ENCODE measurements at regions of chr13 and their contacts with region 1.

Region 1: GRCh38 chr13:27826379-27827353 is 34.4 kb downstream of the GSX1 start:
- DNase-seq: peak; percentile 51 to 65 (median 56)
- H3K4me3 ChIP-seq: no peak overlapping the region
- H3K4me3 Mint-ChIP-seq: peak overlapping the region in 3 of 8 donors; percentile 6 to 48 (median 30)
- H3K27ac ChIP-seq: no peak overlapping the region
- H3K27ac Mint-ChIP-seq: no peak overlapping the region
- H3K4me1 ChIP-seq: peaks cover 12% of the 10 kb centered on the region
- H3K4me1 Mint-ChIP-seq: peaks cover 3 to 12% (median 5%) of the 10 kb centered on the region in 4 donors
- H3K27me3 ChIP-seq: peaks cover 17% of the 10 kb centered on the region
- H3K27me3 Mint-ChIP-seq: peaks cover 37 to 58% of the 10 kb centered on the region in 2 donors

Region 2: DNA sequence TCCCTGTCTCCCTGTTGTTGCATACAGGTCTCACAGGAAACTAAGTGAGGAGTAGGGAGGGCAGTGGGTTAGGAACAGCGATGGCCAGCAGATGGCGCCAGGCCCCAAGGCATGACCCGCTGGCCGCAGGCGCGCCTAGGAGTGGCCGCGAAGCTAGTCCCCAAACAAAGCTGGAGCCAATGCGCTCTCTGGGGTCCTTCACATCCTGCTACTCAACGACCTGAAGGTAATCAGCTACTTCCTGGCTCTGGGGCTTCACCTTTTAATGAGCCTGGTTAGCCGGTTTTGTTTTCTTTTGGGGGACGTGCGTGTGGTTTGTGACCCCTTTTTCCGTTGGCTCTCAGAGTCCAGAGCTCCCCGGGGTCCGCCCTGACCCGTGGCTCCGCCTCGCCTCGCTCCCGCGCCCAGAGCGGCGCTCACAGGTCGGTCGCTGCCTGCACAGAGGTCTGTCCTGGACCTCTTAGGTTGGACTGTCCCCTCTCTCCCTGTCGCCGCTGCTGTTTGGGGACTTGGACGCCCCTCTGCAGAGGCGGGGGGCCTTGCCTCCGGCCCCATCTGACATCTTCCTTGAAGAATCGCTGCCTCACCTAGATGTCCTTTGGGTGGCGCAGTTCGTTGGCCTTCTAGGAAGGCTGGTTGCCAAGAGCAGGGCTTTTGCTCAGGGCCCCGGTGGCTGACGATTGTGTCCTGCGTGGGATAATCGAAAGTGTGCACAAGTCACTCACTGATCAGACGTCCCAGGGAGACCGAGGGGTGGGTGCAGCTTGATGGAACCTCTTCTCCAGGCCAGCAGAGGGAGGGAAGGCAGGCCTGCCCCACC is 464.4 kb before region 1 on chr13:
- CTCF ChIA-PET with region 1: interaction called, 205 read pairs
- POLR2A ChIA-PET with region 1: no interaction called
- intact Hi-C with region 1: loop called (anchors 1 kb)
- DNase-seq: peak; percentile 62 to 72 (median 66)
- H3K4me3 ChIP-seq: peak overlapping the region in 1 of 2 donors; percentile 17
- H3K4me3 Mint-ChIP-seq: peak overlapping the region in 6 of 8 donors; percentile 31 to 81 (median 46)
- H3K27ac ChIP-seq: no peak overlapping the region
- H3K27ac Mint-ChIP-seq: no peak overlapping the region
- H3K4me1 ChIP-seq: peaks cover 9% of the 10 kb centered on the region
- H3K4me1 Mint-ChIP-seq: peaks cover 0 to 7% (median 2%) of the 10 kb centered on the region in 4 donors
- H3K27me3 ChIP-seq: peaks cover 4% of the 10 kb centered on the region
- H3K27me3 Mint-ChIP-seq: peaks cover 5 to 22% of the 10 kb centered on the region in 2 donors

Region 3: DNA sequence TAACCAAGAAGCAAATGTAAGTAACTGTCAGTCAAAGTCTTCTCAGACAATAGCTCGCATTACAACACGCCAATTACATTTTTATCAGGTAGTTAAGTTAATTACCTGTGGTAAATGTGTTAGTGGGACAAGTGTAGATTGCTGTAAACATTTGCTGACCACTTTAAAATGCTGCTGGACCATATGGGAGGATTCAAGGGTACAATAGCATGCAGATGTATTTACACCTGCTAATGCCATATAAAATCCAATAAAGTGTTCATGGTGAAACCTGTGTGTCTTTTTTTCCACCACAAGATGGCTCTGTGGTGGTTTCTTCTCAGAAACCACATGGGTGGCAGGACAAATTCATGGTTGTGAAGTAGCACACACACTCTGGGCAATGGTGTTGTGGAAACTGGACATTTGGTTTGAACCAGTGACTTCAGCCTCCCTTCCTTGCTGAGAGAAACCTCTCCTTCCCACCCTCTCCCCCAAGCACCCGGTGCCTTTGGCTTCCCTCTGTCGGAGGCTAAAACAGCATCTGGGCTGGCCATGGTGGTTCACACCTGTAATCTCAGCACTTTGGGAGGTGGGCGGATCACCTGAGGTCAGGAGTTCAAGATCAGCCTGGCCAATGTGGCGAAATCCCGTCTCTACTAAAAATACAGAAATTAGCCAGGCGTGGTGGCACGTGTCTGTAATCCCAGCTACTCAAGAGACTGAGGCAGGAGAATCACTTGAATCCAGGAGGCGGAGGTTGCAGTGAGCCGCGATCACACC is 420.3 kb before region 1 on chr13:
- CTCF ChIA-PET with region 1: interaction called, 32 read pairs
- POLR2A ChIA-PET with region 1: no interaction called
- intact Hi-C with region 1: loop called (anchors 1 kb)
- DNase-seq: peak; percentile 49 to 60 (median 56)
- H3K4me3 ChIP-seq: no peak overlapping the region
- H3K4me3 Mint-ChIP-seq: peak overlapping the region in 1 of 8 donors; percentile 71
- H3K27ac ChIP-seq: no peak overlapping the region
- H3K27ac Mint-ChIP-seq: no peak overlapping the region
- H3K4me1 ChIP-seq: peaks cover 3% of the 10 kb centered on the region
- H3K4me1 Mint-ChIP-seq: peaks cover 2 to 6% (median 4%) of the 10 kb centered on the region in 4 donors
- H3K27me3 ChIP-seq: no peaks in the 10 kb centered on the region
- H3K27me3 Mint-ChIP-seq: peaks cover 10 to 13% of the 10 kb centered on the region in 2 donors

Region 4: GRCh38 chr13:27455331-27455855 is 371.3 kb before region 1 on chr13:
- CTCF ChIA-PET with region 1: interaction called, 13 read pairs
- POLR2A ChIA-PET with region 1: interaction called, 5 read pairs
- intact Hi-C with region 1: no loop called
- DNase-seq: peak in 4 of 5 donors; percentile 33 to 40 (median 36)
- H3K4me3 ChIP-seq: peak overlapping the region; percentile 48 to 59
- H3K4me3 Mint-ChIP-seq: peak overlapping the region; percentile 89 to 98 (median 94)
- H3K27ac ChIP-seq: peak overlapping the region; percentile 73
- H3K27ac Mint-ChIP-seq: peak overlapping the region; percentile 96 to 99 (median 98)
- H3K4me1 ChIP-seq: peaks cover 32% of the 10 kb centered on the region
- H3K4me1 Mint-ChIP-seq: peaks cover 16 to 44% (median 29%) of the 10 kb centered on the region in 4 donors
- H3K27me3 ChIP-seq: no peaks in the 10 kb centered on the region
- H3K27me3 Mint-ChIP-seq: peaks cover 0 to 2% of the 10 kb centered on the region in 2 donors

Region 5: DNA sequence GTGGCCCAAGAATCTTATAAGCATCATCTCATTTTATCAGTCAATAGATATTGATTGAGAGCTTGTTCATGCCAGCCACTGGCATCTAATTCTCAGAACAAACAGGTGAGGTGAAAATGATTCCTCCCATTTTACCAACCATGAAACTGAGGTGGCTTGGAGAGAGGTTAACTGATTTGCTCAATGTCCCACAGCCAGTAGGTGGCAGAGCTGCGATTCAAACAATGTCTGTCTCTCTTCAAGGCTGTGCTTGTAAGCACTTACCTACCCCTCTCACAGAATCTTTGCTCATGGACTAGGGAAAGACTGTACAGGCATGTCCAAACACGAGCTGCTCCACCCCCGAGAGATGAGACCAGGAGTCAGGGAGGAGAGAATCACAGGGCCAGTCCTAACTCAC is 55.9 kb before region 1 on chr13:
- CTCF ChIA-PET with region 1: interaction called, 23 read pairs
- POLR2A ChIA-PET with region 1: no interaction called
- intact Hi-C with region 1: loop called (anchors 1 kb)
- DNase-seq: peak in 1 of 5 donors; percentile 11
- H3K4me3 ChIP-seq: no peak overlapping the region
- H3K4me3 Mint-ChIP-seq: no peak overlapping the region
- H3K27ac ChIP-seq: no peak overlapping the region
- H3K27ac Mint-ChIP-seq: no peak overlapping the region
- H3K4me1 ChIP-seq: no peaks in the 10 kb centered on the region
- H3K4me1 Mint-ChIP-seq: no peaks in the 10 kb centered on the region
- H3K27me3 ChIP-seq: no peaks in the 10 kb centered on the region
- H3K27me3 Mint-ChIP-seq: peaks cover 27 to 32% of the 10 kb centered on the region in 2 donors

Region 6: GRCh38 chr13:27854606-27855005 is 27.9 kb after region 1 on chr13:
- CTCF ChIA-PET with region 1: interaction called, 12 read pairs
- POLR2A ChIA-PET with region 1: no interaction called
- intact Hi-C with region 1: no loop called
- DNase-seq: no peak
- H3K4me3 ChIP-seq: no peak overlapping the region
- H3K4me3 Mint-ChIP-seq: no peak overlapping the region
- H3K27ac ChIP-seq: no peak overlapping the region
- H3K27ac Mint-ChIP-seq: no peak overlapping the region
- H3K4me1 ChIP-seq: no peaks in the 10 kb centered on the region
- H3K4me1 Mint-ChIP-seq: no peaks in the 10 kb centered on the region
- H3K27me3 ChIP-seq: no peaks in the 10 kb centered on the region
- H3K27me3 Mint-ChIP-seq: peaks cover 28 to 29% of the 10 kb centered on the region in 2 donors

Region 7: GRCh38 chr13:28792992-28793391 is 966.3 kb after region 1 on chr13:
- CTCF ChIA-PET with region 1: no interaction called
- POLR2A ChIA-PET with region 1: no interaction called
- intact Hi-C with region 1: loop called (anchors 1 kb)
- DNase-seq: no peak
- H3K4me3 ChIP-seq: no peak overlapping the region
- H3K4me3 Mint-ChIP-seq: no peak overlapping the region
- H3K27ac ChIP-seq: no peak overlapping the region
- H3K27ac Mint-ChIP-seq: no peak overlapping the region
- H3K4me1 ChIP-seq: no peaks in the 10 kb centered on the region
- H3K4me1 Mint-ChIP-seq: peaks cover 0 to 4% (median 0%) of the 10 kb centered on the region in 4 donors
- H3K27me3 ChIP-seq: no peaks in the 10 kb centered on the region
- H3K27me3 Mint-ChIP-seq: peaks cover 7 to 20% of the 10 kb centered on the region in 2 donors

Measured in CD4-positive, alpha-beta memory T cell (primary cell).